Sigmoid colon (tissue), 7 donors: ENCODE measurements at regions of chr1 and their contacts with region 1.

Region 1: GRCh38 chr1:184386312-184387068 is at the start of gene C1orf21:
- DNase-seq: peak; percentile 96
- H3K4me3 ChIP-seq: peak within 1 kb of the TSS; percentile 83 to 98 (median 91)
- H3K27ac ChIP-seq: peak within 1 kb of the TSS; percentile 86 to 93 (median 92)
- H3K4me1 ChIP-seq: peaks cover 0 to 38% (median 22%) of the 10 kb centered on the region in 4 donors
- H3K27me3 ChIP-seq: no peaks in the 10 kb centered on the region
- CTCF ChIP-seq: no peak
- EP300 ChIP-seq: no peak
- POLR2A ChIP-seq: peak; percentile 65 to 75
- total RNA-seq, gene C1orf21: 56.2 to 80.3 (median 79.2) TPM

Region 2: DNA sequence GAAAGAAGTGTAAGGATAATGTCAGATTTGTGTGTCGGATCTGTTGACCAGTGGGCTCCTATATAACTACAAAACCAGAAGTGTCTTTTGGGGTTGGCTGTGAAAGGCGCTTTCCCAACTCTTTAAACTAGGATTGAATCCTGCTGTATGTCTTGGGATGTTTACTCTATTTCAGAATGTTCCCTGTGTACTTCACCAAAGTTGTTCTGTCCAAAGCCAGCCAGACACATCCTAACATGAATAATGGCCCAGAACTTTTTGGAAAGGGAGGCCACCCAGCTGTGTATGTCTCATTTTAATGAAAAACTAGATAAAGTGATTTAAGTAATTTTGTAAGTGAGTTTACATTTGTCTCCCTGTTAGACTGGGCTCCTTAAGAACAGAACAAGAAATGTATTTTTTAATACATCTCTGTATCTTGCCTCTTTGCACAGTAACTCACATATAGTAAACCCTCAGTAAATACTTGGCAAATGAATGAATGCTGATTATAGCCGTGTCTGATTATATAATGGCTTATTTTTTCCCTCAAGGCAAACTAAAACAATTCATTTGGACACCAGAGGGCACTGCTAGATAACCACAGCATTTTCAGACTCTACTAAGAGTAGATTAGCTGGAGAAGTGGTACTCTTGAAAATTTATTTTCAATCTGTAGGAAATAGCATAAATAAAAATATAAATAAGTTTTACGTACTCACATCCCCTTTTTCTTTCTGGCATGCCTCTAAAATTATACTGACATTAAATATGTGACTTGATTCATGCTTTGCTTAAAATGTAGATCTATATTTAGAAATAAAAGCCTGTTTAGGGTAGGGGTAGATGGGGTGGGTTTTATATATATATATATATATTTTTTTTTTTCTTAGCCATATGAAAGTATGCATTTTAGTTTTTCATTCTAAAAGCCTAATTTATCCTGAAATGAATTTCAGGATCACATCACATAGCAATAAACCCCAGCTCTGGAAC is 311.1 kb before region 1 on chr1:
- intact Hi-C with region 1: loop called (anchors 5 kb)
- DNase-seq: peak; percentile 82
- H3K4me3 ChIP-seq: no peak overlapping the region
- H3K27ac ChIP-seq: peak overlapping the region; percentile 15 to 73 (median 70)
- H3K4me1 ChIP-seq: peaks cover 0 to 47% (median 42%) of the 10 kb centered on the region in 4 donors
- H3K27me3 ChIP-seq: no peaks in the 10 kb centered on the region
- CTCF ChIP-seq: peak; percentile 60 to 80 (median 70)
- EP300 ChIP-seq: no peak
- POLR2A ChIP-seq: no peak

Region 3: DNA sequence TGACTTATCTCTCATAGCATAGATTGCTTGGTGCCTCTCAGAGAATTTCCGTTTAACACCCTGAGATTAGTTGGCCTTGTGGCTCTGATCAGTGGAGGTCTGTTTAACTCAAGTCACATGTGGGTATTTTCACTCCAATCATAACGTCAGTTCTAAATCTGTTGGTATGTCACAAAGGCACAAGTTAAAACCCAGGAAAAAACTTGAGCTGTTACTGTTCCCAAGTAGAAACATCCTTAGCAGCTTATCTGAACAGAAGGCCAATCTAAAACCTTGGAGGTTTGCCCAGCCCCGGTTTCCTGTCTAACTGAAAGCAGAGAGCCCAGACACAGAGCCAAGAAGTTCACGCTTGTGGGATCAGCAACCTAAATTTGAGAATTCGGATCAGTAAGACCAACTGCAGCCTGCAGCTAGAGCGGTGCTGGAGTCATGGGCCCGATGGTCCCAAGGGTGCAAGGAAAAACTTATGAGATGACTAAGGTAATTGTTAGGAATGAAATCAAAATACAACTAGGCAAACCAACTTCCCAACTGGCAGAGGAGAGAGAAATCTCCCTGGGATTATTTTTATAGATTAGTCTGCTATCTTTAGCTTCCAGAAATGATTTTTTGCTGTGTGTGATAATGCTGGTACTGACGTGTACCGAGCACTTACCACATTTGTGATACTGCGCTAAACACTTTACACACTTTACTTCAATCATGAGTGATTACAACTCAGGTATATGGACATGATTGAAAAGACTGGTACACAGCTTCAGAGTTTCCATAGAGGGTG is 89.8 kb before region 1 on chr1:
- intact Hi-C with region 1: loop called (anchors 5 kb)
- DNase-seq: peak; percentile 96
- H3K4me3 ChIP-seq: no peak overlapping the region
- H3K27ac ChIP-seq: peak overlapping the region; percentile 63 to 71 (median 68)
- H3K4me1 ChIP-seq: peaks cover 0 to 41% (median 33%) of the 10 kb centered on the region in 4 donors
- H3K27me3 ChIP-seq: no peaks in the 10 kb centered on the region
- CTCF ChIP-seq: no peak
- EP300 ChIP-seq: no peak
- POLR2A ChIP-seq: no peak

Region 4: GRCh38 chr1:184563308-184563707 is 176.8 kb after region 1 on chr1:
- intact Hi-C with region 1: loop called (anchors 5 kb)
- DNase-seq: no peak
- H3K4me3 ChIP-seq: no peak overlapping the region
- H3K27ac ChIP-seq: peak overlapping the region in 2 of 4 donors; percentile 31 to 54
- H3K4me1 ChIP-seq: peaks cover 0 to 27% (median 23%) of the 10 kb centered on the region in 4 donors
- H3K27me3 ChIP-seq: no peaks in the 10 kb centered on the region
- CTCF ChIP-seq: peak in 3 of 4 experiments; percentile 14 to 49 (median 32)
- EP300 ChIP-seq: no peak
- POLR2A ChIP-seq: no peak

Region 5: GRCh38 chr1:184590163-184590750 is 203.8 kb after region 1 on chr1:
- intact Hi-C with region 1: no loop called
- DNase-seq: no peak
- H3K4me3 ChIP-seq: no peak overlapping the region
- H3K27ac ChIP-seq: no peak overlapping the region
- H3K4me1 ChIP-seq: no peaks in the 10 kb centered on the region
- H3K27me3 ChIP-seq: no peaks in the 10 kb centered on the region
- CTCF ChIP-seq: no peak
- EP300 ChIP-seq: no peak
- POLR2A ChIP-seq: no peak

Region 6: GRCh38 chr1:184664042-184664655 is 277.7 kb after region 1 on chr1:
- intact Hi-C with region 1: loop called (anchors 2 kb)
- DNase-seq: peak; percentile 92
- H3K4me3 ChIP-seq: peak overlapping the region in 3 of 4 donors; percentile 12 to 34 (median 29)
- H3K27ac ChIP-seq: peak overlapping the region in 1 of 4 donors; percentile 29
- H3K4me1 ChIP-seq: peaks cover 0 to 36% (median 13%) of the 10 kb centered on the region in 4 donors
- H3K27me3 ChIP-seq: no peaks in the 10 kb centered on the region
- CTCF ChIP-seq: peak; percentile 85 to 93 (median 92)
- EP300 ChIP-seq: no peak
- POLR2A ChIP-seq: no peak